ENCODE measurements at regions of chr20 and their contacts with region 1.

Region 1: DNA sequence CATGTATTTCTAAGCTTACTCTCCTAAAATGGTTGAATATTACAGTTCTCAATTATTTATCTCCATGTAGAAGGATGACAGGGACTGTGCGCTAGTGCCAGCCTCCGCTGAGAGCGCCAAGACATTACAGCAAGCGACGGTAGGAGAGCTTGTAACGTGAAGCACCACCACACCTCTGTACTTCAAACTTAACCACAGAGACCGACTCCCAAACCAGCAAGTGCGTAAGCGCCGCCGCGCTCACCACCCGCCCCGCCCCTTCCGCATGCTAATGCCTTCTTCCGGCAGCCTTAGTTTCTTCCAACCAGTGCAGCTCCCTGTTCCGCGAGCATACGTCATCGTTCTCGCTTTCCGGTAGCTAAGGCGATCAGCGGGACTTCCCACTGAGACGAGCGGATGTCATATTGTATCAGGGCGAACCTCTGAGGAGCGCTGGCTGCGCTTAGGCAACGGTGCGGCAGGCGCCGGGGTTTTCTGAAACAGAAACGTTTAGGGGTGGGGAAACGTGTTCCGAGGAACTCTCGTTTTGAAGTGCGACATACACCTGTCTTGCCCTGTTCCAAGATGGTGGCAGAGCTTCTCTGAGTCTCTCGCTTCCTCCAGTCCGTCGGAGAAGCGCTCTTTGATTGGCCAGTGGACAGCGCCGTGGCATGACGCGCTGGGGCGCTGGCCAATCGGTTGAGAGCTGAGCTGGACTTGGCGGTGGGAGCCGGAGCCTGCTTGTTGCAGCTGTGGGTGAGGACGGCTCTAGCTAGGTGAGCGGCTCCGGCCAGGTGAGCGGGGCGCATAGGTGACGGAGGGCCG is at the start of gene SEC23B:
- DNase-seq: peak; percentile 96
- ATAC-seq: peak; percentile 96
- H3K4me3 ChIP-seq: peak within 1 kb of the TSS; percentile 80
- H3K27ac ChIP-seq: peak within 1 kb of the TSS; percentile 98
- H3K4me1 ChIP-seq: no peaks in the 10 kb centered on the region
- H3K27me3 ChIP-seq: no peaks in the 10 kb centered on the region
- CTCF ChIP-seq: no peak
- EP300 ChIP-seq: peak; percentile 34 to 36; a peak in 1 of 4 replicates
- POLR2A ChIP-seq: peak; percentile 91
- RAD21 ChIP-seq: no peak
- polyA plus RNA-seq, gene SEC23B: 49.1 to 73.2 TPM

Region 2: GRCh38 chr20:18466894-18467730 is 40.3 kb before region 1 on chr20 and contains the starts of genes DZANK1 and POLR3F:
- CTCF ChIA-PET with region 1: interaction called, 10 read pairs
- POLR2A ChIA-PET with region 1: interaction called, 13 read pairs
- RAD21 ChIA-PET with region 1: interaction called, 11 read pairs
- SMC1A ChIA-PET with region 1: interaction called, 15 read pairs
- in situ Hi-C with region 1: no loop called
- intact Hi-C with region 1: loop called (anchors 1 kb)
- DNase-seq: peak; percentile 75
- ATAC-seq: peak; percentile 100
- H3K4me3 ChIP-seq: peak within 1 kb of the TSS; percentile 93
- H3K27ac ChIP-seq: peak within 1 kb of the TSS; percentile 96
- H3K4me1 ChIP-seq: no peaks in the 10 kb centered on the region; the same call in 1 of the 2 replicates
- H3K27me3 ChIP-seq: no peaks in the 10 kb centered on the region
- CTCF ChIP-seq: no peak
- EP300 ChIP-seq: no peak
- POLR2A ChIP-seq: peak; percentile 86
- RAD21 ChIP-seq: no peak
- polyA plus RNA-seq, gene DZANK1: 6.1 to 7.6 TPM
- polyA plus RNA-seq, gene POLR3F: 9.5 to 12.4 TPM

Region 3: GRCh38 chr20:18496740-18497592 is 10.5 kb before region 1 on chr20 and contains the start of gene RBBP9:
- CTCF ChIA-PET with region 1: interaction called, 46 read pairs
- POLR2A ChIA-PET with region 1: interaction called, 96 read pairs
- RAD21 ChIA-PET with region 1: interaction called, 67 read pairs
- SMC1A ChIA-PET with region 1: interaction called, 83 read pairs
- in situ Hi-C with region 1: no loop called
- intact Hi-C with region 1: loop called (anchors 1 kb)
- DNase-seq: peak; percentile 31
- ATAC-seq: peak; percentile 100
- H3K4me3 ChIP-seq: peak within 1 kb of the TSS; percentile 73
- H3K27ac ChIP-seq: peak within 1 kb of the TSS; percentile 45
- H3K4me1 ChIP-seq: no peaks in the 10 kb centered on the region
- H3K27me3 ChIP-seq: no peaks in the 10 kb centered on the region
- CTCF ChIP-seq: no peak
- EP300 ChIP-seq: no peak
- POLR2A ChIP-seq: peak; percentile 73
- RAD21 ChIP-seq: no peak
- polyA plus RNA-seq, gene RBBP9: 7.1 to 9.2 TPM

Region 4: DNA sequence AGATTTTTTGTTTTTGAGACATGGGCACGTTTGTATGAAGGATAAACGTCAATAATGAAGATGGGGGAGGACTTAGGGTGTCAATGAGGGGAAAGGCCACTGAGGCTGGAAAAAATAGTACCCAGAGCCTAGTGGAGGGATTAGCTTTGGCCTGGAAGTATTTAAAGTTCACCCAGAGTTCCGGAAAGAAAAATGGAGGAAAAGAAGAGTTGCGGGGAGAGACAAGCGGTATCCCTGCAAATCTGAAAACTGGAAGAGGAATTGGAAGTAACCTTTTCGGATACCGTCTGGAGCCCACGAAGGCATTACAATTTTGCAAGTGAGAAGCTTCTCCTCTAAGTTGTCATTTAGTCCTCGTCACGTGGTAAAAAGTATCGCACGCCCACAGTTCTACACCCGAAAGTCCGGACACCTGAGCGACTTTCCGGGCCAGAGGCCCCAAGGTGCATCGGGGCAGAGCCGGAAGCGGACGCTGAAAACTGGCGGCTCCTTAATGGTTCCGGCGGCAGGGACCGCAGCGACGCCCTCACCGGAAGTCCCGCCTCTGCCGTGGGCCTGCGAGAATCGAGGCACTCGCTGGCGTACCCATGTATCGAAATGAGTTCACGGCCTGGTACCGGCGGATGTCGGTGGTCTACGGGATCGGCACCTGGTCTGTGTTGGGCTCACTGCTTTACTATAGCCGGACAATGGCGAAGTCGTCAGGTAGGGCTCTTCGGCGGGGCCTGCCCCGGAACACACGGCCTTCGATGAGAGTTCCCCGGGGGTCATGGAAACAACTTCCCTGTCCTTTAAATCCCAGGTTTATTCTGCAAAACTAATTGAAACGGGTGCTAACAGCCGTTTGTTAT is 59.7 kb after region 1 on chr20 and contains the start of gene SMIM26:
- CTCF ChIA-PET with region 1: interaction called, 3 read pairs
- POLR2A ChIA-PET with region 1: interaction called, 7 read pairs
- RAD21 ChIA-PET with region 1: interaction called, 8 read pairs
- SMC1A ChIA-PET with region 1: interaction called, 4 read pairs
- in situ Hi-C with region 1: no loop called
- intact Hi-C with region 1: loop called (anchors 2 kb)
- DNase-seq: peak; percentile 80
- ATAC-seq: peak; percentile 100
- H3K4me3 ChIP-seq: peak within 1 kb of the TSS; percentile 98
- H3K27ac ChIP-seq: peak within 1 kb of the TSS; percentile 78
- H3K4me1 ChIP-seq: peaks cover 4% of the 10 kb centered on the region; the same call in 1 of the 2 replicates
- H3K27me3 ChIP-seq: no peaks in the 10 kb centered on the region
- CTCF ChIP-seq: no peak
- EP300 ChIP-seq: no peak
- POLR2A ChIP-seq: peak; percentile 97
- RAD21 ChIP-seq: no peak
- polyA plus RNA-seq, gene SMIM26: 303 to 329 TPM

Region 5: DNA sequence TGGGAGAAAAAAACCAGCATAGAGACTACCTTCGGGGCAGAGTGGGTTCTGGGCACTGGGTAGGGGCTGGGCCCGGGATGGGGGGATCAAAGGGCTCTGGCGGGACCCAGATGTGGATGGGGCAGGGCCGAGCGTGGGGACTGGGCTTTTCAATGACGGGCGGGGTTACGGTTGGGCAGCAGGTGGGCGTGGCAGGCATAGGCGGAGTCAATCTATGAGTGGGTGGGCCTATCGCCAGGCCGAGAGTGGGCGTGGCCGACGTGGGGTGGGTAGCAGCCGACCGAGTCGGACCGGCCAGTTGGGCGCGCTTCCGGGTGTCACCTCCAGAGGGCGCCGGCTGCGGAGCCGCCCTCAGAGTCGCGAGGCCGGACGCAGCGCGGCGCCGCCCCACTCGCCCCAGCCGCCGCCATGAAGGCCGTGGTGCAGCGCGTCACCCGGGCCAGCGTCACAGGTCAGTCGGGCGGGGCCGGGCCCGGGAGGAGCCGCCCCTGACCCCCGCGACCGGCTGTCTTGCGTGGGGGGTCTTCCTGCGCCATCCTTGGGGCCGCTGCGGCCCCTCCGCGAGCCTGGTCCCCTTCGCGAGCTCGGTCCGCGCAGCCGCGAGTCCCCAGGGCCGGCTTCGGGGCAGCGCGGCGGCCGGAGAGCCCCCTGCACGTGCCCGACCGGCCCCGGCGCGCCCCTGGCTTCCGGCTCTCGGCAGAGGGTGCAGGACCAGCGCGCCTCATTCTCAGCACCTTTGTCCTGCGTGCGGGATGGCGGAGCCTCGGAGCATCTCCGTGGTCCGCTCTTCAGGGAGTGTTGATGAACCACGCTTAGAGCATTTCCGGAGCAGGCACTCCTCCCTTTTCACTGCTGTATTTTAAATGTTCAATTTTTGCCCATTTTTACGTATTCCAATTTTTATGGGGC is 80.5 kb after region 1 on chr20 and contains the start of gene DTD1:
- CTCF ChIA-PET with region 1: no interaction called
- POLR2A ChIA-PET with region 1: interaction called, 7 read pairs
- RAD21 ChIA-PET with region 1: interaction called, 4 read pairs
- SMC1A ChIA-PET with region 1: interaction called, 10 read pairs
- in situ Hi-C with region 1: no loop called
- intact Hi-C with region 1: loop called (anchors 5 kb)
- DNase-seq: peak; percentile 57
- ATAC-seq: peak; percentile 94
- H3K4me3 ChIP-seq: peak within 1 kb of the TSS; percentile 92
- H3K27ac ChIP-seq: peak within 1 kb of the TSS; percentile 65
- H3K4me1 ChIP-seq: no peaks in the 10 kb centered on the region
- H3K27me3 ChIP-seq: no peaks in the 10 kb centered on the region
- CTCF ChIP-seq: peak; percentile 56 to 73 (median 63)
- EP300 ChIP-seq: no peak
- POLR2A ChIP-seq: peak; percentile 90
- RAD21 ChIP-seq: no peak
- polyA plus RNA-seq, gene DTD1: 24.3 to 35.5 TPM

Region 6: GRCh38 chr20:20017001-20017843 is 1509.8 kb after region 1 on chr20 and contains the start of gene NAA20:
- CTCF ChIA-PET with region 1: no interaction called
- POLR2A ChIA-PET with region 1: no interaction called
- RAD21 ChIA-PET with region 1: no interaction called
- SMC1A ChIA-PET with region 1: no interaction called
- in situ Hi-C with region 1: loop called (anchors 25 kb)
- intact Hi-C with region 1: no loop called
- DNase-seq: peak; percentile 45
- ATAC-seq: peak; percentile 97
- H3K4me3 ChIP-seq: peak within 1 kb of the TSS; percentile 82
- H3K27ac ChIP-seq: peak within 1 kb of the TSS; percentile 74
- H3K4me1 ChIP-seq: peaks cover 14% of the 10 kb centered on the region
- H3K27me3 ChIP-seq: no peaks in the 10 kb centered on the region
- CTCF ChIP-seq: peak; percentile 72 to 91 (median 85)
- EP300 ChIP-seq: no peak
- POLR2A ChIP-seq: peak; percentile 86
- RAD21 ChIP-seq: peak; percentile 49; the same call in 1 of the 2 replicates
- polyA plus RNA-seq, gene NAA20: 309 to 366 TPM

Measured in GM12878 (cell line).